Left ventricle myocardium inferior (tissue), 1 donor: ENCODE measurements at regions of chr2 and their contacts with region 1.

Region 1: DNA sequence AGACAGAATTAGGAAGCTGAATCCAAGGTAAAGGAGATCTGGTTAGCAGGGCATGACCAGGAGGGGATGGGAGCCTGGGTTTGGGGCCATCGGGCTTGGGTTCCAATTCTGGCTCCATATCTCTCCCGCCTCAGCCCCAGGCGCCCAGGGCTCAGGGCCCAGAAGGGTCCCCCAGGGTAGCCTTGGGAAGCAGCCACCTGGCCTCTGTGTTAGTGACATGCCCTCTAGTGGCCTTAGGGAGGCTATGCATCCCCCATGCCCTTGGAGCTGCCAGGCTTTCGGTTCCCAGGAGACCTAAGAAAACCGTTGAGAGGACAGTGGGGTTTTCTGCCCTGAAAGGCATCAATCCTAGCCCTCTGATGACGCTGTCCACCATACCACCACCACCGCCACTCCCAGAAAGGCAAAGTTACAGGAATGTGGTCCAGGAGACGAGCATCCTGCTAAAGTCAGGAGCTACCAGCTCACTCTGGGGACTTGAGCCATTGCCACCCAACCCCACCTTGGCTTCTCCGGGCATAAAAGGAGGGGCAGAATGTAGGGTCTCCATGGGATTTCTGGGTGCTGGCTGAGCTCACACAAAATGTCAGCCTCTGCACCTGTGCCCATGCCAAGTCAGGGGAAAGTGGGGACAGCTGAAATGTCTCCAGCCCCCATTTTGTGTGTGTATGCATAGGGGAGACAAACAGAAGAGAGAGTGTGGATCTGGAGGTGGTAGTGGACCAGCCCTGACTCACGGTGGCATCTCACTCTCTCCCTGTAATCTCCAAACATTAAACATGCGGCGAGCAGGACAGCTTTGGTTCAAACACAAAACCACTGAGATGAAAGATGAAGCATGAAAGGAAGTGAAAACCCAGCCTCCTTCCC is 56.5 kb downstream of the EMX1 start:
- DNase-seq: no peak
- H3K4me3 ChIP-seq: no peak overlapping the region
- H3K27ac ChIP-seq: no peak overlapping the region
- H3K4me1 ChIP-seq: peaks cover 10% of the 10 kb centered on the region
- H3K27me3 ChIP-seq: no peaks in the 10 kb centered on the region
- CTCF ChIP-seq: peak; percentile 83

Region 2: DNA sequence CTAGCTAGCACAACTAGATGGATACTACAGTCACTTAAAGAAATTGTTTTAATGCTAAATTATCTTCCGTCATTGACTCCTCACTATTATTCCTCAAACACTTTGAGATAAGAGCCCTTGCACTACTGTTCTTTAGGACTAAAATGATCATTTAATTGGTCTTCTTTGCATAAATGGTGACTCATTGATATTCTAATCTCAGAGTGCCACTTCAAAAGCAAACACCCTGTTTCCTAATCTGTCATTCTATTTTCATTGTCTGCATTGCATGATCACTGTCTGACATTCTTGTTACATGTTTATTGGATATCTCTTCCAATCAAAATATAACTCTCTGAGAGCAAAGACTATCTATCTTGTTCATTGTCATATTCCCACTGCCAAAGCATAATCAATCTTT is 461.9 kb before region 1 on chr2:
- intact Hi-C with region 1: no loop called
- DNase-seq: no peak
- H3K4me3 ChIP-seq: no peak overlapping the region
- H3K27ac ChIP-seq: no peak overlapping the region
- H3K4me1 ChIP-seq: peaks cover 12% of the 10 kb centered on the region
- H3K27me3 ChIP-seq: no peaks in the 10 kb centered on the region
- CTCF ChIP-seq: no peak

Region 3: DNA sequence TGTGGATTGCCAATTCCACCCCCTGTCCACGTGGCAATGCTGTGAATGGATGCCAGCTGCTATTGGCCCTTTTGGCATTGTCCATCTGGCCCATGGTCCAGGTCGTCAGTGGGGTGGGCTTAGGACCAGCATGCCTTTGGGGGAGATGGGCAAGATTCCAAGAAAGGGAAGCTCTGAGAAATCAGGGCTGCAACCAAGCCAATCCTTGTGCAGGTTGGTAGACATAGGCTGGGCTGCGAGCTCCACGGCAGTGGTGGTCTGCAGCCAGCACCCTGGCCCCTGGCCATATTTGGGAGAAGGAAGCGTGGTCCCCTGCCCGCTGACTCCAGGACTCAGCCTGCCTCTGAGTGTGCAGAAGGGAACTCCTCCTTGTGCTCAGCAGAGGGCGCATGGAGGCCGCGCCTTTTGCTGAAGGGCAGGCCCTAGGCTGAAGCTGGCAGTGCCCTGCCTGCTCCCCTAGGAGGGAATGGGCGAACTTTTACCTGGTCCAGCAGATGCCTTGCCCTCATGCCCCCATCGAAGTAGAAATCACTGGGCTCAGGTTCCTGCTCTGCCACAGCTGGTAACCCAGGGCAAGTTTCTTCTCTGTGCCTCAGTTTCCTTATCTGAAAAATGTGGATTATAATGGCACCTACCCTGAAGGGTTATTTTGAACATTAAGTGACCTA is 81.2 kb before region 1 on chr2:
- intact Hi-C with region 1: loop called (anchors 10 kb)
- DNase-seq: peak; percentile 64
- H3K4me3 ChIP-seq: no peak overlapping the region
- H3K27ac ChIP-seq: no peak overlapping the region
- H3K4me1 ChIP-seq: peaks cover 45% of the 10 kb centered on the region
- H3K27me3 ChIP-seq: peaks cover 36% of the 10 kb centered on the region
- CTCF ChIP-seq: peak; percentile 81